ENCODE measurements at regions of chr1 and their contacts with region 1.

Region 1: DNA sequence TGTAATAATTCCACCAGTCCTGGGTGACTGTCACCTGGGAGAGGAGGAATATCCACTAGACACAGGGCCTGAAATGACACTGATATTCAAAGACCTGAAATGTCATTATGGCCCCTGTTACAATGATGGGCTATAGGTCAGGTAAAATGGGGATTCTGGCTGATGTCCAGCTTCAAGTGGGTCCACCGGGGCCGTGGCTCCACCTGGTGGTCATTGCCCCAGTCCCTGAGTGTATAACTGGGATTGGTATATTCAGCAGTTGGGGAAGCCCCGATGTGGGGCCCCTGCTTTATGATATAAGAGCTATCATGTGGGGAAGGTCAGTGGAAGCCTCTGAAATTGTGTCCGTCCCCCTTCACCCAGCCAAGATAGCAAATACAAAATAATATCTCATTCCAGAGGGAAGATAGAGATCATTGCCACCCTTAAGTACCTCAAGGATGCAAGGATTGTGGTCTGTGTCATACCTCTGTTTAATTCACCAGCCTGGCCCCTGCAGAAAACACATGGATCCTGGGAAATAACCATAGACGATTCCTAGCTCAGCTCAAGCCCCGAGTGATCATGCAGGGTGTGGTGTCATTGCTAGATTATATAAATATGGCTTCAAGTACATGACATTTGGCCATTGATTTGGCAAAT is 19.4 kb downstream of the PLEKHO1 start:
- DNase-seq: peak; percentile 86

Region 2: DNA sequence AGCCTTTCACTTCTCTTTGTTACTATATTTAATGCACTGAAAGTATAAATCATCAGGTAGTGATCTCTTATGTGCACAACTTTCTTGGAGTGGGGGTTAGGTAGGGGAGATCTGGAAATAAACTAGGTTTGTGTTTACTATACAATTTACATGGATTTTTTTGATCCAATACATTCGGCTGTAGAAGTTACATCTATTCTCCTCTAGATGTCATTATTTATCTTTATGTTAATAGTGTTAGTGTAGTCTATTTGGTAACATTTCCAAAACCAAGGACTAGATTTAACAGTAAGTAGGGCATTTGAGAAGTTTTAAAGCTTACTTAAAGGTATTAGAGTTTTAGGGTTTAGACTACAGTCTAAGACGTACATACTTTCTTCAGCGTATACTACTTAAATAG is 96.1 kb before region 1 on chr1:
- intact Hi-C with region 1: loop called (anchors 1 kb)
- DNase-seq: no peak

Region 3: DNA sequence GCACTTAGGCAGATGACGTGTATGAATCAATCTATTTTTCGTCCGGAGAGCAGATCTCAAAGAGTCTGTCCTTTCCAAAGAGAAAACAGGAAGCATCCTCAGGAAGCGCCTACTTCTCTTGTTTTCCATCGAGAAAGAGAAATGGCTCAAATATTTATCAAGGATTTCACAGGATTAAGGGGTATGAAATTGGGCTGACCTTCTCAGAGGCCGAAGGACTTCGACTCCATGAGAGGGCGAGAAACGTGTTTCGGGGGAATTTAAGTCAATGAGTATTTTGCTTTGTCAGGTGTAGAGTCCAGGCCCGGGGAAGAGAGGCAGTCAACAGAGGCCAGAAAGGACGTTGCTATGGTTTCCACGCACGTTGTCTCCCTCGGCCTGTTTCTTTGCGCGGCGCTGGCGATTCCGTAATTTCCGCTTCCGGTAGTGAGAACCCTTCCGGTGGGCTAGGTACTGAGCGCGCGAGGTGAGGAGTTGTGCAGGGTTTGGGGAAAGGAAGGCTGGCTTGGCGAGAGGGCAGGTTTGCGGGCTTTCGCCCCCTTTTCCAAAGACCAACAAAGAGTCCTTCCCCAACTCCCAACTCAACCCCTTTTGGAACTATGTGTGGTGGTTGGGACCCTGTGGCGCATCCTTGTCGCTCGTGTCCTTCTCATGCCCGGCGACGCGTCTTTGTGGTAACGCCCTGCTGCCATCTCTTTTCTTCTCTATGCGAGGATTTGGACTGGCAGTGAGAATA is 124.5 kb after region 1 on chr1 and contains the start of gene MRPS21:
- intact Hi-C with region 1: no loop called
- DNase-seq: peak; percentile 94
- total RNA-seq, gene MRPS21: 67.8 TPM